HEK293 (cell line): ENCODE measurements at regions of chr1 and their contacts with region 1.

Region 1: GRCh38 chr1:226553924-226554282 is 5.3 kb downstream of the STUM start:
- H3K4me3 ChIP-seq: no peak overlapping the region
- H3K27ac ChIP-seq: no peak overlapping the region
- H3K4me1 ChIP-seq: peaks cover 27% of the 10 kb centered on the region
- CTCF ChIP-seq: no peak

Region 2: GRCh38 chr1:226355669-226356551 is 198.0 kb before region 1 on chr1:
- CTCF ChIA-PET with region 1: no interaction called
- POLR2A ChIA-PET with region 1: no interaction called
- H3K4me3 ChIP-seq: no peak overlapping the region
- H3K27ac ChIP-seq: no peak overlapping the region
- H3K4me1 ChIP-seq: no peaks in the 10 kb centered on the region
- CTCF ChIP-seq: no peak

Region 3: GRCh38 chr1:226569879-226570547 is 16.1 kb after region 1 on chr1:
- CTCF ChIA-PET with region 1: interaction called, 28 read pairs
- POLR2A ChIA-PET with region 1: interaction called, 3 read pairs
- H3K4me3 ChIP-seq: no peak overlapping the region
- H3K27ac ChIP-seq: no peak overlapping the region
- H3K4me1 ChIP-seq: 0 out of 2 replicates have a peak, but pooled peaks cover 2% of the 10 kb centered on the region
- CTCF ChIP-seq: peak; percentile 76; the same call in 1 of the 2 replicates